ENCODE measurements at regions of chr12 and their contacts with region 1.

Region 1: GRCh38 chr12:47819896-47820630 is at the start of gene HDAC7:
- DNase-seq: peak; percentile 80
- CTCF ChIP-seq: no peak

Region 2: GRCh38 chr12:47797441-47797840 is 22.6 kb before region 1 on chr12:
- CTCF ChIA-PET with region 1: interaction called, 685 read pairs
- POLR2A ChIA-PET with region 1: no interaction called
- DNase-seq: peak; percentile 74
- CTCF ChIP-seq: peak; percentile 57

Measured in GM10248 (cell line).